Activated naive CD4-positive, alpha-beta T cell treated with anti-CD3 and anti-CD28 coated beads, Interleukin-2, amount 10 ng/mL, durations not matched to agents 7 days and 5 days (primary cell): ENCODE measurements at regions of chr15 and their contacts with region 1.

Region 1: GRCh38 chr15:76973362-76973743 is 21.6 kb upstream of the PSTPIP1 start:
- DNase-seq: peak; percentile 78
- H3K4me3 Mint-ChIP-seq: no peak overlapping the region
- H3K27ac Mint-ChIP-seq: no peak overlapping the region
- H3K4me1 Mint-ChIP-seq: peaks cover 25% of the 10 kb centered on the region
- H3K27me3 Mint-ChIP-seq: peaks cover 22% of the 10 kb centered on the region

Region 2: DNA sequence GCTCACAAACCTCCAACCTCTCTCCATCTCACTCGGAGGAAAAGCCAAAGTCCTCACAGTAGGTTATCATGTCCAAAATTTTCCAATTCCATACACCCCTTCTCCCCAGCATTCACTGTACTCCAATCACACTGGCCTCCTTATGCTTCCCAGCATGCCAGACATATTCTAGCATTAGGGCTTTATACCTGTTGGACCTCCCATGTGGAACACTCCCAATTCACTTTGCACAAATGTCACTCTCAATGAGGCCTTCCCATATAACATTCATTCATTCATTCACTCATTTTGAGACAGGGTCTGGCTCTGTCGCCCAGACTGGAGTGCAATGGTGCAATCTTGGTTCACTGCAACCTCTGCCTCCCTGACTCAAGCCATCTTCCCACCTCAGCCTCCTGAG is 88.1 kb before region 1 on chr15:
- CTCF ChIA-PET with region 1: no interaction called
- DNase-seq: no peak
- H3K4me3 Mint-ChIP-seq: no peak overlapping the region
- H3K27ac Mint-ChIP-seq: no peak overlapping the region
- H3K4me1 Mint-ChIP-seq: peaks cover 10% of the 10 kb centered on the region
- H3K27me3 Mint-ChIP-seq: no peaks in the 10 kb centered on the region

Region 3: GRCh38 chr15:76931397-76932007 is 41.9 kb before region 1 on chr15 and contains the start of gene RCN2:
- CTCF ChIA-PET with region 1: no interaction called
- DNase-seq: peak; percentile 95
- H3K4me3 Mint-ChIP-seq: peak within 1 kb of the TSS; percentile 86
- H3K27ac Mint-ChIP-seq: peak within 1 kb of the TSS; percentile 90
- H3K4me1 Mint-ChIP-seq: peaks cover 45% of the 10 kb centered on the region
- H3K27me3 Mint-ChIP-seq: peaks cover 15% of the 10 kb centered on the region

Region 4: DNA sequence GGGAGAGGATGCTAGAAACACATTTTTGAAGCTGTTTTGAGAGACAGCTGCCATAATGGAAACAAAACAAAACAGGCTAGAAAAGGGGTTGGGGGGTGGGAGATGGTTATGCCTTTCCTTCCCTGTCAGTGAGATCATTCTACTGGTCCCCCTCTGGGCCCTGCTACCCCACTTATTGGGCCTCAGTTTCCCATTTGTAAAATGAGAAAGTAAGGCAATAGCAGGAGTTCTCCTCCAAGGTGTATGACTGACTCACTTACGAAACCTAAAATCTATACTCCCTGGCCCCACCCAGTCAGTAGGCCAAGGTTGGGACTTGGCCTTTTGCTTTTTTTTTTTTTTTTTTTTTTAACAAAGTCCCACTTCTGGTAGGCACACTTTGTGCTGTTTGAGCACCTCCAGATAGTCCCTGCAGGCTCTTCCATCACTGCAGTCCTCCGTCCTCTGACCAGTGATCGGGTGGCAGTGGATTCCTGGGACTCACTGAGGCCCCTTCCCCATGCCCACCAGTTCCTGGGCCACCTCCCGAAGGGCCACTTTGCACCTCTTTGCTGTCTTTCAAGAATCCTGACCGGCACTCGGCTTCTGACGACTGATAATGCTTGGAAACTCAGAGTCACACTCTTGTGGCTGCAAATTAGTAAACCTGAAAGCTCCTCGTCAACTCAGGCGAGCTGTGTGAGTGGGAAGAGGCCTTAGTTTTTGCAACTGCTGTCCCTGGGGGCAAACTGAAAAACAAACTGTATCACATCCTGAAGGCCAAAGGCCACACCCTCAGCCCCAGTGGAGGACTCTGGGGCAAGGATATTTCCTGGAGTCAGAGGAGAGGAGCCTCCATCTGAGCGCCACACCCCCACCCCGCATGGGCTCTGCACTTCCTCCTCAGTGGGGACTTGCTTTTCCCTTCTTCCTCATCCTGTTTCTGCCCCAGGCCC is 14.8 kb after region 1 on chr15:
- CTCF ChIA-PET with region 1: interaction called, 62 read pairs
- DNase-seq: peak; percentile 67
- H3K4me3 Mint-ChIP-seq: peak overlapping the region; percentile 24
- H3K27ac Mint-ChIP-seq: peak overlapping the region; percentile 95
- H3K4me1 Mint-ChIP-seq: peaks cover 63% of the 10 kb centered on the region
- H3K27me3 Mint-ChIP-seq: no peaks in the 10 kb centered on the region

Region 5: DNA sequence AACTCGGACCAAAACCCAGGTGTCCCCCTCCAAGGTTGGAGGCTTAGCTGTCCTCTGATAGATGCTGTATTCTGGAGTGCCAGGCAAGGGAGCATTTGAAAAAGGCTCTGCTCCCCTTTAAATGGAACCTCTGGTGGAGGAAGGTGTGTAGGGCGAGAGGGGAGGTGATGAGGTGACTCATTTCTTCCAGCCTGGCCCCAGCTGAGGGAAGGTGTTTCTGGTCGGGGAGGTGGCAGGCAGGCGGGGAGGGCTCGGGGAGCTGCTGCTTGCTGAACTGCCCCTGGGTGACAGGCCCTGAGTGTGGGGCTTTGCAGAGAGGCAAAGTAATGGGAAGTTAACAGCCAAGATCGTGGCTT is 40.4 kb after region 1 on chr15:
- CTCF ChIA-PET with region 1: interaction called, 31 read pairs
- DNase-seq: peak; percentile 90
- H3K4me3 Mint-ChIP-seq: peak overlapping the region; percentile 76
- H3K27ac Mint-ChIP-seq: peak overlapping the region; percentile 97
- H3K4me1 Mint-ChIP-seq: peaks cover 96% of the 10 kb centered on the region
- H3K27me3 Mint-ChIP-seq: no peaks in the 10 kb centered on the region

Region 6: GRCh38 chr15:77034695-77035489 is 61.5 kb after region 1 on chr15:
- CTCF ChIA-PET with region 1: interaction called, 82 read pairs
- DNase-seq: peak; percentile 20
- H3K4me3 Mint-ChIP-seq: no peak overlapping the region
- H3K27ac Mint-ChIP-seq: no peak overlapping the region
- H3K4me1 Mint-ChIP-seq: peaks cover 3% of the 10 kb centered on the region
- H3K27me3 Mint-ChIP-seq: peaks cover 10% of the 10 kb centered on the region

Region 7: GRCh38 chr15:77057685-77058084 is 84.3 kb after region 1 on chr15:
- CTCF ChIA-PET with region 1: interaction called, 11 read pairs
- DNase-seq: no peak
- H3K4me3 Mint-ChIP-seq: no peak overlapping the region
- H3K27ac Mint-ChIP-seq: no peak overlapping the region
- H3K4me1 Mint-ChIP-seq: peaks cover 14% of the 10 kb centered on the region
- H3K27me3 Mint-ChIP-seq: no peaks in the 10 kb centered on the region

Region 8: GRCh38 chr15:77118882-77119321 is 145.5 kb after region 1 on chr15:
- CTCF ChIA-PET with region 1: interaction called, 13 read pairs
- DNase-seq: peak; percentile 59
- H3K4me3 Mint-ChIP-seq: no peak overlapping the region
- H3K27ac Mint-ChIP-seq: no peak overlapping the region
- H3K4me1 Mint-ChIP-seq: peaks cover 6% of the 10 kb centered on the region
- H3K27me3 Mint-ChIP-seq: no peaks in the 10 kb centered on the region

Region 9: DNA sequence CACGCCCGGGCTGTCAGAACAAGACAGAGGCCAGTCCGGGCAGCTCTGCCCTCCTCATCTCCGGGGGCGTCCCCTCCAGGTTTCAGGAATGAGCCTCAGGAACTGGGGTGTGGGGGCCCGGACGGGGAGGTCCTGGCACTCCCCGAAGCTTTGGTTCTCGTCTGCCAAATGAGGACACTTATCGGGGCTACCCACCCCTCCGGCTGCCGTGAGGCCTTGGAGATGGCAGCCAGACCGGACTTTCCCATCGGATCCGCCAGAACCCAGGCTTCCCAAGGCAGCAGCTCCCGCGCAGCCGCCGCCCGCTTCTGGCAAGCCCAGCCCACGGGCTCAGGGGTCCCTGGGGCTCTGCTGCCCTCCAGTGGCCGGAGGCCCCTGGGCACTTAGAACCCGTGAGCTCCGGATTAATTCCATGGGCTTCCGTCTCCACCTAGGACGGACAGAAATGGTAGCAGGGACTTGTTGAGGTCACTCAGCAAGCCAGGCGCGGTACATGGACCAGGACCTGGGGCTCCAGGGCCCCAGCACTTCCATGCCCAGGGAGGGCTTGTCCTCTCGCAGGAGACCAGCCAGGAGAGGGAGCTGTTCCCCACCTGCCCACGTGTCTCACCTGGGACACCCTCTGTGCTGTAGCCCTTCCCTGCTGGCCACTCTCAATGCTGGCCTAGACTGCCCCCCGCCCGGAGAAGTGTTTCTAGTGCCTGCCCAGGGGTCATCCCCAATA is 570.0 kb after region 1 on chr15:
- CTCF ChIA-PET with region 1: interaction called, 15 read pairs
- DNase-seq: peak; percentile 83
- H3K4me3 Mint-ChIP-seq: peak overlapping the region; percentile 69
- H3K27ac Mint-ChIP-seq: no peak overlapping the region
- H3K4me1 Mint-ChIP-seq: peaks cover 13% of the 10 kb centered on the region
- H3K27me3 Mint-ChIP-seq: peaks cover 30% of the 10 kb centered on the region